Posterior cingulate gyrus (tissue), 11 donors: ENCODE measurements at regions of chr20 and their contacts with region 1.

Region 1: GRCh38 chr20:51608061-51608460 is 65.5 kb upstream of the NFATC2 start:
- DNase-seq: no peak

Region 2: GRCh38 chr20:51393571-51393970 is 214.5 kb before region 1 on chr20:
- intact Hi-C with region 1: no loop called
- DNase-seq: peak in 1 of 10 donors; percentile 77

Region 3: DNA sequence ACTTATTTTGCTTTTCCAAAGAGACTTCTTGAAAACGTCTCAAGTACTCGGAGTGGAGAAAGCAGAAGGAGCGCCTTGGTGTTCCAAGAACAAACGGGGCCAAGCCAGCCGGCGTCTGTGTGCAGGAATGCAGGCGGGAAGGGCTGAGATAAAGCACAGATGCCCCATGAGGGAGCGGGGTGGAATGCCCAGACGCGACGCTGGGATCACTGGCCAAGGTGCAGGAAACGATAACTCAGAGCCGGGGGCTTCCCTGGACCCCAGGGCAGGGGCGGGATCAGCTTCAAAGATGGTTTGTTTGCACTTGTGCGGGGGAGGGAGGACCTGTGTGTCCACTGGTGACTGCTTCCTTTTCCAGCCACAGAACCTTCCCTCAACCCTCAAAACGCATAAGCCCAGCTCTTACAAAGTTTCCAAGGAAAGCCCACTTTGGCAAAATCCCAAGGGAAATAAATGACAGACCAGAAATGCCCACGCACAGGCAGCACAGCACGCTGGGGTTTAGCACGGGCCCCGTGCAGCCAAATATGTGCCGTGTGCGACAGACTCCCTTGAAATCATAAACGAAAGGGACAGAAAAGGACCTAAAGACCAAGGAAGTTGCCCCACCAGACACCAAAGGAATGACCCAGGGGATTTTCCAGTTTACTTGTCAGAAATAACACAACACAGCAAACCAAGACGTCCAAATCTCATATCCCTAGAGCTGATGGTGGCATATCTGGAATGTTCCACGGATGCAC is 179.5 kb before region 1 on chr20:
- intact Hi-C with region 1: no loop called
- DNase-seq: peak in 6 of 10 donors; percentile 21 to 85 (median 72)

Region 4: DNA sequence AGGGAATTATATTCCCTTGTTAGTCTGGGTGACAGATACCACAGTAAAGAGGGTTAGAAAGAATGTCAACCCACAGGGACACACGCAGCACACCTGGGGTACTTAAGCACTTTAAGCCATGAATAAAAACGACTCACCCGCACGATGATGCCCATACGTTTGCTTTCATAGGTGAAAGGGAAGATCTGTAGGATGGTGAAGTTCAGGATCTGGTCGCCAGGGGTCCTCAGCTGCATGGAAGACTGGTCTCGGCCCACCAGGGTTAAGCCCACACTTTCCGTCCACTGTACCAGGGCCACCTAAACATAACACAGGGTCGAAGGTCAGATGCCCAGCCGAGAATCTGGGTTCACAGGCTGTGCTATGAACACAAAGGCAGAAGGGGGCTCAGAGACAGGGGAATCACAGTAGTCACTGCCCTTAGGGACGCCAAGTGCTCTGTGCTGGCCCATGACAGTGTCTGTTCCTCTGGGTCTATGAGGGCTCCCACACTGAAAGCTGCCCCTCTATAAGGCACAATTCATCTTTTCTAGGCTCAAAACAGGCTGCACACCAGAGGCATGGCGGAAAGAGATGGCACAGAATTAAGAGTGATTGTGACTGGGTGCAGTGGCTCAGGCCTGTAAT is 31.3 kb after region 1 on chr20:
- intact Hi-C with region 1: loop called (anchors 1 kb)
- DNase-seq: peak in 9 of 10 donors; percentile 31 to 92 (median 69)

Region 5: DNA sequence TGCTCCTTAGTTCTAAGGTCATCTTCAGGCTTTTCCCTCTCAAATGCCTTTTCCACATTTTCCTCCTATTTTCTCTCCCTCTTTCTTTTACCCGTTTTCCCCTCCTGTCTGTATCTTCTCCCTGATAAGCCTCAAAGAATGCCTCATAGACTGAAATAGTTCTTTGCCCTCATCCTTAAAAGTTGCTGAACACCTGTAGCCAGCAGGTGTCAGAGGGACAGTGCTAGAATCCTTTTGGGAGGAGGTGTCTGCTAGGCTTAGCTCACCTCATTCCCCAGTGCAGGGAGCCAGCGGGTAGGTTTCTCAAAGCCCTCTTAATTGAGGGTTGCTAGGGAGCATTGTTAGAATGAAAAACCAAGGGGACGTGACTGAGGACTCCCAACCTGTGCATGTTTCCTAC is 1568.1 kb after region 1 on chr20:
- intact Hi-C with region 1: no loop called
- DNase-seq: no peak